Aorta (tissue), 5 donors: ENCODE measurements at regions of chr6 and their contacts with region 1.

Region 1: DNA sequence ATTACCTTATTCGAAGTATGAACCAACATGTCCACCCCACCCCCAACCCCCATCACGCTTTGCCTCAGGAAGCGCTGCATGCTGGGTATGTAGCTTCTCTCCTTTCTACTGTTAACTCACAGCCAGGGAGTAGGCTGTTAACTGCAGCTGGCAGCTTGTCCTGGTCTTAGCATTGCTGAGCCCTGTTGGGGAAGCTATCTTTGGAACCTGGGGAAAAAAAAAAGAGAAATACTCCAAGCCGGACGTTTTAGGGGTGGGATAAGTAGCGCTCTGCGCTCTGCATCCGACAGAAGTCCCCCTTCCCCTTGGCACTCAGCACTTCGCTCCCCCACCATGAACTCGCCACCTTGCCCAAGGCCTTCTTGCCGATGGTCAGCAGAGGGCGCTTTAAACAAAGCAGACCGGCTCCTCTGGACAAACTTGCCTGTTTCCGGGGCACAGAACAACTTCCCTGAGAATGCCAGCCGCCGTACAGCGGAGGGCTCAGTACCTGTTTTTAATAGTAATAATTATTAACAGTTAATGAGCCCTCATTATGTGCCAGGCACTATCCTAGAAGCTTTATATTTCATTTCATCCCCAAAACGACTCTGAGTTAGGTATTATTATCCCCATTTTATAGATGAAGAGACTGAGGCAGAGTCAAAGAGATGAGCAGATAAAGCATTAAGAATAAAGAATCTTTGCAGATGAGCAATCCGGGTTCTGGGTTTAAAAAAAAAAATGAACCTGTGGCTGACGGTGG is 35.2 kb upstream of the MDFI start:
- DNase-seq: peak; percentile 83 to 88
- ATAC-seq: peak; percentile 81
- H3K4me3 ChIP-seq: no peak overlapping the region
- H3K27ac ChIP-seq: no peak overlapping the region
- H3K4me1 ChIP-seq: no peaks in the 10 kb centered on the region
- H3K27me3 ChIP-seq: no peaks in the 10 kb centered on the region

Region 2: DNA sequence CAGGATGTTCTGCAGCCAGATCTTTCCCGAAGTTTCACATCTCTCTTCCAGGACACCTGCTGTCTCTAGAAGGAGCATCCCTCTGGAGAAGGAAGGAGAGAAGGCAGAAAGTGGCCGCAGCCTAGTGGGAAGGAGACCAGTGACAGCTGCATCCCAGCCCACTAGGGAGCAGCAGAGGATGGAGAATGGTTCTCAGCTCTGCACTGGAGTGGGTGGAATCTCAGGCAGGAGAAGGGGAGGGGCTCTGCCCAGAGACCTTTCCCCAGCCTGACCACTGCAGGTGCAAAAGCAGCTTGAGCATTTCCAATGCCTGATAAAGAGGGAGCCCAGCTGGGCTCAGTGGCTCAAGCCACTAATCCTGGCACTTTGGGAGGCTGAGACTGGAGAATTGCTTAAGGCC is 235.3 kb before region 1 on chr6:
- intact Hi-C with region 1: loop called in 1 of 2 experiments (anchors 1 kb)
- DNase-seq: no peak
- ATAC-seq: peak; percentile 64
- H3K4me3 ChIP-seq: no peak overlapping the region
- H3K27ac ChIP-seq: no peak overlapping the region
- H3K4me1 ChIP-seq: no peaks in the 10 kb centered on the region
- H3K27me3 ChIP-seq: no peaks in the 10 kb centered on the region

Region 3: DNA sequence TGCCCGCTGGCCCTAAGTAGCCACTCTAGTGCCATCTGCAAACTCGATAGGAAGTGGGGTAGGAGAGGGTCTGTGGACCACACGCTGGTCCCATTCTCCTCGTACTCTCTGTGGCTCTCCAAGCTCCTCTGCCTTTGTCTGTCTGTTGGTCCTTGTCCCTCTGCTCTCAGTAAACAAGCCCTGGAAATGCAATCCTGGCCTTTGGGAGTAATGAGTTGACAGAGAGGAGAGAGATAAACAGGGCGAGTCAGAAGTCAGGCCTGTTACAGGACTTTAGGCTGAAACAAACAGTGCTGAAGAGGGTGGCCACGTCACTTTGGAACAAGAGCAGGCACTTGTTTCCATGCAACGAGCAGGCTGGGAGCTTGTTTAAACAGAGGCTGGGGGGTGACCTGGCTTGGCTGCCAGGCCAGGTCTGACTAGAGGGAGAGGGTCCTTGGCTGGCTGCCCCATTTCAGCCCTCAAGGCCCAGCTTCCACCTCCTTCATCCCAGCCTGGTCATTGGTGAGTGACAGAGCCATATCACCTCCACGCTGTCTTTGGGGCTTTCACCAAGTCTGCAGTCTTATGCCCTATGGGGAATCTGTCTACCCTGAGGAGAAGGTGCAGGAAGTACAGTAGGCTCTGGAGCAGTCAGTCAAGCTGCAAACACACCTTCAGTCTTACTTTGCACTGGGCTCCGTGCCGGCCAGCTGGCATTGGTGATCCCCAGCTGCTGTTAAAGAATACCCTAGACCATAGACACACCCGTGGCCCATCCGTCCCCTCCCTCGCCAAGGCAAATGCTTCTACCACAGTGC is 34.3 kb before region 1 on chr6:
- intact Hi-C with region 1: no loop called
- DNase-seq: no peak
- ATAC-seq: no peak
- H3K4me3 ChIP-seq: no peak overlapping the region
- H3K27ac ChIP-seq: no peak overlapping the region
- H3K4me1 ChIP-seq: no peaks in the 10 kb centered on the region
- H3K27me3 ChIP-seq: no peaks in the 10 kb centered on the region

Region 4: DNA sequence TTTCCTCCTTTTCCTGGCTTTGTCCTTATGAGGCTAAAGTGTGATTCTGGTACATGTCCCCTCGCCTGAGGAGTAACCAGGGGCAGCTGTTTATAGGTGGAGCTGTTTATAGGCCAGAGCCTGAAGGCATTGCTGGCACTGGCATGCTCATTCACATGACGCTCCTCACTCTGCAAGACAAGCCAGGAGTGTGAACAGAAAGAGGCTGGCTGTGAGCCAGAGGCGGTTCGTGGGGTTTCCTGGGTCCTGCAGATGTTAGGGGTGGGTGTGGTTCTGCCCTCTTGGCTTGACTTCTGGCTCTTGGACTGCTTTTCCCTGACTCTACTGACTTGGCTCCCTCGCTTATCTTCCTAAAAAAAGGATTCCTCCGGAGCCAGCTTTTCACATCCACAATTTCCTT is 22.4 kb after region 1 on chr6:
- intact Hi-C with region 1: no loop called
- DNase-seq: peak; percentile 30 to 58
- ATAC-seq: no peak
- H3K4me3 ChIP-seq: no peak overlapping the region
- H3K27ac ChIP-seq: no peak overlapping the region
- H3K4me1 ChIP-seq: no peaks in the 10 kb centered on the region
- H3K27me3 ChIP-seq: peaks cover 0 to 1% of the 10 kb centered on the region in 2 donors

Region 5: GRCh38 chr6:41779793-41780545 is 176.9 kb after region 1 on chr6 and contains the start of gene FRS3:
- intact Hi-C with region 1: loop called (anchors 5 to 10 kb)
- DNase-seq: peak; percentile 99 to 100
- ATAC-seq: peak; percentile 98
- H3K4me3 ChIP-seq: peak within 1 kb of the TSS; percentile 71 to 85
- H3K27ac ChIP-seq: peak within 1 kb of the TSS in 1 of 2 donors; percentile 62
- H3K4me1 ChIP-seq: no peaks in the 10 kb centered on the region
- H3K27me3 ChIP-seq: no peaks in the 10 kb centered on the region
- total RNA-seq, gene FRS3: 3.7 to 5.4 TPM

Region 6: DNA sequence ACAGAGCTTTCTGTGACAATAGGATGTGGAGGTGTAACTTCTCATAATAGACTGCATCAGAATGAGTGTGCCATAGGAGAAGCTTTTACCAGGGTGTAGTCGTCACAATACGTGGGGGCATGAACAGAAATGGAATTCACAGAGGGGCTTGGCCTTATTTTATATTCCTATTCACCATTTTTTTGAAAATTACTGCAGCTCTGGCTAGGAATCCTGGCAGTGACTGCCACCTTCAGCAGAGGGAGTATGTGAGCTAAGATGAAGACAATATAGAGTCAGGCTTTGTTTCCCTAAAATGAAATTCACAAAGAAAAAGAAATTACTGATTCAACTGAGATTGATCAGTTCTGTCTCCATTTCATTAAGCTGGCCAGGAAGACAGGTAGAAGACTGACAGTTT is 198.3 kb after region 1 on chr6:
- intact Hi-C with region 1: no loop called
- DNase-seq: no peak
- ATAC-seq: no peak
- H3K4me3 ChIP-seq: no peak overlapping the region
- H3K27ac ChIP-seq: no peak overlapping the region
- H3K4me1 ChIP-seq: no peaks in the 10 kb centered on the region
- H3K27me3 ChIP-seq: no peaks in the 10 kb centered on the region